ENCODE measurements at regions of chr18 and their contacts with region 1.

Region 1: DNA sequence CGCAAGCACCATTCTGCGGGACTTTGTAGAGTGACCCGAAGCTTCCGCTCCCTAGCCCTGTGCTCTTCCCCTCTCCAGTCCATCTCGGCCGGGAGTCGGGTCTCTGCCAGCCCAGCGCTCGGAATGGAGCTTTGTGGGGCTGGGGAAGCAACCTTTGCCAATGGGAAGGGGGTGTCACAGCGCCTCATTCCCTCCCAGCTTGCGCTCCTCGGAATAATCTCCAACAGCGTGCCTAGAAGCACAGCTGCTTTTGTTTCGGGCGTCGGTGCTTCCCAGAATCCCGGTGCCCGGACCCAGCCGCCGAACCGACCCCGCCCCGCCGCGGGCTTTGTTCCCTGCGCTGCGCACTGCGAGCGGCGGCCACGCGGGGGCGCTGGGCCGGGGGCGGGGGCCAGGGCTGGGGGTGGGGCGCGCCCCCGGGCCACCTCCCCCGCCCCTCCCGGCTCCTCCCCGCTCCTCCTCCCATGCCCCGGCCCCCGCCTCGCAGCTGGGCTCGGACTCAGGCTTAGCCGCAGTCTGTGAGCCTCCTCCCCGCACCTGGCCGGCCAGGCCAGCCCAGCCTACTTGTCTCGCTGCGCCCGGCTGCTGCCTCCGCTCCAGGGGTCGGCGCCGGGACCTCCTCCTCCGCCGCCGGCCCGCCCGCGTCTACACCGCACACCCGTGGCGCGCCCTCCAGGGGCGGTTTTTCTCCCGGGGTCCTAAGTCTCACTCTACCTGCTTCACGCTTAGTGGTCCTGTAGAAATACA is 77.7 kb upstream of the SMAD2 start:
- H3K4me3 ChIP-seq: peak overlapping the region; percentile 45
- H3K27ac ChIP-seq: peak overlapping the region; percentile 22; the same call in 1 of the 2 replicates
- H3K4me1 ChIP-seq: peaks cover 2% of the 10 kb centered on the region; the same call in 1 of the 2 replicates
- CTCF ChIP-seq: peak; percentile 37; the same call in 1 of the 2 replicates

Region 2: GRCh38 chr18:47949202-47949601 is 58.9 kb before region 1 on chr18:
- CTCF ChIA-PET with region 1: interaction called, 10 read pairs
- POLR2A ChIA-PET with region 1: no interaction called
- H3K4me3 ChIP-seq: no peak overlapping the region
- H3K27ac ChIP-seq: no peak overlapping the region
- H3K4me1 ChIP-seq: 0 out of 2 replicates have a peak, but pooled peaks cover 3% of the 10 kb centered on the region
- CTCF ChIP-seq: no peak